ENCODE measurements at regions of chr11 and their contacts with region 1.

Region 1: DNA sequence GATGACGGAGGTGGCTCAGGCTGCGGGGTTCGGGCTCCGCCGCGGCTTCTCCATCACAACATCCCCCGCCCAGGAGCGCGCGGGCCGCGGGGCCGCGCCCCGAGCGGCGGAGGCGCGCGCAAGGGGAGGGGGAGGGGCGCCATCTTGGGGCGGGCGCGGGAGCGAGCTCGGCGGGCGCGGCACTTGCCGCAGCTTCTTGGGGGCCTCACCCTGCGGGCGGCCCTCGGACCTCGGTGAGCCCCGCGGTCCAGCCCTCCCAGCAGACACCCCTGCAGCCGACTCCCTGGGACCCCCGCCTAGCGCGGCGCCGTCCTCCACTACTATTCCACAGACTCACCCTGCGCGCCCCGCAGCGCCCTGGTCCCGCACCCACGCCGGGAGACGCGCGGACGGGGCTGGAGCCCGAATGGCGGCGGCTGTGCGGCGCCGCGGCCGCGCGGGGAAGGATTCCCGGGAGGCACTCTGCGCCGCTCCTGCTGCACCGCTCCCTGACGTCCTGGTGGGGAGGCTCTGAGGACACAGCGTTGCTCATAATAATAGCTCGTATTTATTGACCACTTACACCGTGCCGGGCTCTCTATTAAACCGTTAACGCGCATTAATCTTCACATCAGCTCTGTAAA is at the start of gene APBB1:
- DNase-seq: peak; percentile 75
- H3K4me3 Mint-ChIP-seq: peak within 1 kb of the TSS; percentile 76
- H3K27ac Mint-ChIP-seq: peak within 1 kb of the TSS; percentile 77
- H3K4me1 Mint-ChIP-seq: peaks cover 3% of the 10 kb centered on the region
- H3K27me3 Mint-ChIP-seq: no peaks in the 10 kb centered on the region
- total RNA-seq, gene APBB1: 44.5 to 45.1 TPM

Region 2: GRCh38 chr11:4607781-4608666 is 1811.1 kb before region 1 on chr11 and contains the start of gene TRIM68:
- CTCF ChIA-PET with region 1: no interaction called
- intact Hi-C with region 1: loop called (anchors 10 kb)
- DNase-seq: peak; percentile 97
- H3K4me3 Mint-ChIP-seq: peak within 1 kb of the TSS; percentile 94
- H3K27ac Mint-ChIP-seq: peak within 1 kb of the TSS; percentile 88
- H3K4me1 Mint-ChIP-seq: peaks cover 45% of the 10 kb centered on the region
- H3K27me3 Mint-ChIP-seq: no peaks in the 10 kb centered on the region
- total RNA-seq, gene TRIM68: 11.3 to 15.4 TPM

Region 3: DNA sequence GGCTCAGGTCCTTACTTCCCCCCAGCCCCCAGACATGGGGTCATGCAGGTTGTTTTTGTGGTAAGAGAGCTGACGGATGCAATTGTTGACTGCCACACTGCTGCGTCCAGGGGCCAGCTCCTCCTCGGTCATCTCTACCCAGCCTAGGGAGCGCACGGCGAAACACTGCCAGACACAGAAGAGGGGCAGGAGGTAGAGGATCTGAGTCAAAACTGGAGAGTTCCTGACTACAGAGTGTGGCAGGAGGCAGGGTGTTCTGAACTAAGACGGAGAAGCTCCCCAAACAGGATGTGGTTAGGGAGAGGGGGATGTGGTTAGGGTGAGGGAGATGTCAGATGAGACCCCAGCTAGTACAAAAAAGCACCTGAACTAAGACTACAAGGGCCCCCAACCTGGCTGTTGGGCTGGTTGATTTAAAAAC is 16.5 kb before region 1 on chr11:
- CTCF ChIA-PET with region 1: interaction called, 13 read pairs
- intact Hi-C with region 1: loop called (anchors 2 kb)
- DNase-seq: peak; percentile 94
- H3K4me3 Mint-ChIP-seq: peak overlapping the region; percentile 64
- H3K27ac Mint-ChIP-seq: peak overlapping the region; percentile 84
- H3K4me1 Mint-ChIP-seq: peaks cover 89% of the 10 kb centered on the region
- H3K27me3 Mint-ChIP-seq: no peaks in the 10 kb centered on the region

Region 4: DNA sequence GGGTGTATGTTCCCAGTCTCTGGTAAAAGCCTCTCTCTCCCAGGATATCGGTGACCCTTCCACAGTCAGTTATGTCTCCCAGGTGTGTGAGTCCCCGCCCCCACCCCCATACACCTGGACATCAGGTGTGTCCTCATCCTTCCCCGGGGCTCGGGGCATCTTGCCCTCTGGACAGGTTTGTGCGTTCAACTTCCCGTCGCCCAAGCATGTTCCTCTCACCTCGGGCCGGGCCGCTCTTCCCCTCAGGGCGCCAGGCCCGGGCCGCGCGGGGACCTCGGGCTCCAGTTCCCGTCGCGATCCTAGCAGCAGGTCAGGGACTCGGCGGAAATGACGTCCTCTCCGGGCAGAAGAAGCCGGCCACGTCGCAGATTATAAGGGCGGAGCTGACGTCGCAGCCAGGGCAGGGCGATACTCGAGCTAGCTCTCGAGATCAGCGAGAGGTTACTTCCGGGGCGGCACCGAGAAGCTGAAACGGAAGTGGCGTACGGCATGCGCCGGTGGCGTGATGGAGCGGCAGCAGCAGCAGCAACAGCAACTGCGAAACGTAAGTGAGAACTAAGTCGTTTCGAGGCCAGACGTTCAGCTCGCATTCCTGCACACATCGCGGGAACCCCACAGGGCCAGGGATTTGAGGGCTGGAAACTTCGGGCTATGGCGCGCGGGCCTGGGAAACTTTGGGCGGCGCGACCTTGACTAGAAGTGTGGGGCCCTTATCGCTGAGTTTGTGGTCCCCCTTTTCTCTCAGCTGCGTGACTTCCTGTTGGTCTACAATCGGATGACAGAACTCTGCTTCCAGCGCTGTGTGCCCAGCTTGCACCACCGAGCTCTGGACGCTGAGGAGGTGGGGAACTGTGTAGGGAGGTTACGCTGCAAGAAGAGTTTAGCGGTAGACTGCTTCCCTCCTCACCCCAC is 62.1 kb after region 1 on chr11 and contains the starts of genes ARFIP2 and TIMM10B:
- CTCF ChIA-PET with region 1: no interaction called
- intact Hi-C with region 1: loop called (anchors 1 kb)
- DNase-seq: peak; percentile 99
- H3K4me3 Mint-ChIP-seq: peak within 1 kb of the TSS; percentile 94
- H3K27ac Mint-ChIP-seq: peak within 1 kb of the TSS; percentile 96
- H3K4me1 Mint-ChIP-seq: peaks cover 38% of the 10 kb centered on the region
- H3K27me3 Mint-ChIP-seq: no peaks in the 10 kb centered on the region
- total RNA-seq, gene ARFIP2: 33.5 to 37.9 TPM
- total RNA-seq, gene TIMM10B: 35.1 to 41.7 TPM

Region 5: GRCh38 chr11:7520981-7521487 is 1101.9 kb after region 1 on chr11:
- CTCF ChIA-PET with region 1: no interaction called
- intact Hi-C with region 1: loop called (anchors 5 kb)
- DNase-seq: no peak
- H3K4me3 Mint-ChIP-seq: no peak overlapping the region
- H3K27ac Mint-ChIP-seq: no peak overlapping the region
- H3K4me1 Mint-ChIP-seq: peaks cover 45% of the 10 kb centered on the region
- H3K27me3 Mint-ChIP-seq: no peaks in the 10 kb centered on the region

Measured in activated naive CD4-positive, alpha-beta T cell treated with anti-CD3 and anti-CD28 coated beads for 36 hours (primary cell).